ENCODE measurements at regions of chr9 and their contacts with region 1.

Region 1: DNA sequence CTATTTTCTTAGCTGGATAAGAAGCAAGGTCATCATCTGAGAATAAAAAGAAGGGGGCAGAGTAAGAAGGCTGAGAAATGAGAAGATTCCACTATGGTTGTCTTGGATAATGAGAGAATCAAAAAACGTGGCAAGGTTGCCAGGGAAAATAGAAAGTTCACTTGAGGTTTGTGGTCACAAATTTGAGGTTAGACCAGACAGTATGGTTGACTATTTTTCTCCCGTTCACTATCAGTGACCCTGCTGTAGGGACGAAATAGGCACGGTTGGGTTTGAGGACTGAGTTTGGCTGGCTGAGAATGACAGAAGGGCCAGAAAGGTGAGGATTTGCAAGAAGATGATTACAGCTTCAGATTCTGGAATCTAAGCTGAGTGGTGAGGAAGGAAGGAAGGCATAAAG is 266.0 kb upstream of the ZNF462 start:
- DNase-seq: no peak
- H3K4me3 Mint-ChIP-seq: no peak overlapping the region
- H3K27ac Mint-ChIP-seq: no peak overlapping the region
- H3K4me1 Mint-ChIP-seq: no peaks in the 10 kb centered on the region
- H3K27me3 Mint-ChIP-seq: no peaks in the 10 kb centered on the region
- CTCF ChIP-seq: no peak

Region 2: GRCh38 chr9:106456581-106456980 is 140.4 kb before region 1 on chr9:
- CTCF ChIA-PET with region 1: no interaction called
- intact Hi-C with region 1: loop called (anchors 1 kb)
- DNase-seq: no peak
- H3K4me3 Mint-ChIP-seq: no peak overlapping the region
- H3K27ac Mint-ChIP-seq: no peak overlapping the region
- H3K4me1 Mint-ChIP-seq: no peaks in the 10 kb centered on the region
- H3K27me3 Mint-ChIP-seq: no peaks in the 10 kb centered on the region
- CTCF ChIP-seq: no peak